CD8-positive, alpha-beta T cell (primary cell): ENCODE measurements at regions of chr4 and their contacts with region 1.

Region 1: GRCh38 chr4:183074296-183074990 is 24.6 kb upstream of the WWC2 start:
- DNase-seq: no peak
- ATAC-seq: no peak
- H3K4me3 ChIP-seq: no peak overlapping the region
- H3K4me3 Mint-ChIP-seq: no peak overlapping the region
- H3K27ac ChIP-seq: no peak overlapping the region
- H3K27ac Mint-ChIP-seq: no peak overlapping the region
- H3K4me1 ChIP-seq: no peaks in the 10 kb centered on the region
- H3K4me1 Mint-ChIP-seq: no peaks in the 10 kb centered on the region
- H3K27me3 ChIP-seq: no peaks in the 10 kb centered on the region
- H3K27me3 Mint-ChIP-seq: peaks cover 7% of the 10 kb centered on the region
- CTCF ChIP-seq: no peak

Region 2: DNA sequence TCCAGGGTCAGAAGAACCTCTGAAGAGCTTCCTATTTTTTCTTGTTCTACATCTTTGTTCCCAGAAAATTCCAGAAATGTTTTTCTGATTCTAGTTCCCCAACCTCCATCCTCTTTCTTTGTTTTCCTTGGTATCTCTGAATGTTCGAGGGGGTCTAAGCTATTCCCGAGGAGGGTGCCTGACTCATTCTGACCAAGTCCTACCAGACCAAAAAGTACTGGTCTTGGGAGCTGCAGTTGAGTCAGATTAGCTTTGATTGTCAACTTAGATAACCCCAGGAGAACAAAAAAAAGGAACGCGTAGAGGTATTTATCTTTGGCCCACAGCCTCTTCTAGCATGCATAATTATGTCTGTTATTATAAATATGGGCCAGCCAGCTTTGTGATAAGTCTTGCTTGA is 843.4 kb before region 1 on chr4:
- CTCF ChIA-PET with region 1: no interaction called
- POLR2A ChIA-PET with region 1: no interaction called
- intact Hi-C with region 1: no loop called
- DNase-seq: no peak
- ATAC-seq: no peak
- H3K4me3 ChIP-seq: no peak overlapping the region
- H3K4me3 Mint-ChIP-seq: no peak overlapping the region
- H3K27ac ChIP-seq: no peak overlapping the region
- H3K27ac Mint-ChIP-seq: no peak overlapping the region
- H3K4me1 ChIP-seq: no peaks in the 10 kb centered on the region
- H3K4me1 Mint-ChIP-seq: no peaks in the 10 kb centered on the region
- H3K27me3 ChIP-seq: no peaks in the 10 kb centered on the region
- H3K27me3 Mint-ChIP-seq: no peaks in the 10 kb centered on the region
- CTCF ChIP-seq: no peak

Region 3: GRCh38 chr4:183098723-183099536 is 24.5 kb after region 1 on chr4 and contains the start of gene WWC2:
- CTCF ChIA-PET with region 1: interaction called, 15 read pairs
- POLR2A ChIA-PET with region 1: no interaction called
- intact Hi-C with region 1: no loop called
- DNase-seq: peak in 8 of 9 experiments; percentile 46 to 78 (median 60)
- ATAC-seq: peak; percentile 78
- H3K4me3 ChIP-seq: peak within 1 kb of the TSS; percentile 62 to 86
- H3K4me3 Mint-ChIP-seq: peak within 1 kb of the TSS; percentile 76
- H3K27ac ChIP-seq: peak within 1 kb of the TSS in 1 of 2 experiments; percentile 22
- H3K27ac Mint-ChIP-seq: no peak within 1 kb of the TSS
- H3K4me1 ChIP-seq: peaks cover 18% of the 10 kb centered on the region
- H3K4me1 Mint-ChIP-seq: peaks cover 10% of the 10 kb centered on the region
- H3K27me3 ChIP-seq: peaks cover 0 to 7% of the 10 kb centered on the region in 2 experiments
- H3K27me3 Mint-ChIP-seq: peaks cover 34% of the 10 kb centered on the region
- CTCF ChIP-seq: no peak
- total RNA-seq, gene WWC2: 0.73 to 1.8 TPM

Region 4: DNA sequence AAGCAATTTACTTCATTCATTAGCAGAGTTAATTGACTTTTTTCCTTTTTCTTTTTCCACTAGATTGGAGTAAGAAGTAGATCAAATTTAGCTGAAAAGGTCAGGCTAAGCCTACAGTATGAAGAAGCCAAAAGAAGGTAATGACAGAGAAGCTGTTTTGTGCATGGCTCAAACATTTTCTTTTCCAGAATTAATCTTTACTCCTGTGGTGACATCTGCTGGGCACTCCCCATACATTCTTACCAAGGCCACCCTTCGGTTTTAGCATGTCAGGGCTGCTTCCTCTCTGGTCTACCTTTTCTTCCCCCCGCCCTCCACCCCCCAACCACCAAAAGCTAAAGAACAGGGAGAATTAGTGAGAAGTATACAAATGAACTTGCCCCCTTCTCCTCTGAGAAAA is 175.4 kb after region 1 on chr4:
- CTCF ChIA-PET with region 1: interaction called, 35 read pairs
- POLR2A ChIA-PET with region 1: no interaction called
- intact Hi-C with region 1: no loop called
- DNase-seq: peak in 2 of 9 experiments; percentile 17 to 32
- ATAC-seq: no peak
- H3K4me3 ChIP-seq: no peak overlapping the region
- H3K4me3 Mint-ChIP-seq: no peak overlapping the region
- H3K27ac ChIP-seq: no peak overlapping the region
- H3K27ac Mint-ChIP-seq: no peak overlapping the region
- H3K4me1 ChIP-seq: no peaks in the 10 kb centered on the region
- H3K4me1 Mint-ChIP-seq: no peaks in the 10 kb centered on the region
- H3K27me3 ChIP-seq: no peaks in the 10 kb centered on the region
- H3K27me3 Mint-ChIP-seq: peaks cover 2% of the 10 kb centered on the region
- CTCF ChIP-seq: no peak

Region 5: GRCh38 chr4:183261953-183262775 is 187.7 kb after region 1 on chr4:
- CTCF ChIA-PET with region 1: interaction called, 35 read pairs
- POLR2A ChIA-PET with region 1: no interaction called
- intact Hi-C with region 1: loop called (anchors 1 kb)
- DNase-seq: peak; percentile 36 to 76 (median 69)
- ATAC-seq: peak; percentile 89
- H3K4me3 ChIP-seq: no peak overlapping the region
- H3K4me3 Mint-ChIP-seq: no peak overlapping the region
- H3K27ac ChIP-seq: no peak overlapping the region
- H3K27ac Mint-ChIP-seq: peak overlapping the region; percentile 7
- H3K4me1 ChIP-seq: peaks cover 4% of the 10 kb centered on the region
- H3K4me1 Mint-ChIP-seq: peaks cover 6% of the 10 kb centered on the region
- H3K27me3 ChIP-seq: no peaks in the 10 kb centered on the region
- H3K27me3 Mint-ChIP-seq: peaks cover 1% of the 10 kb centered on the region
- CTCF ChIP-seq: peak; percentile 73

Region 6: GRCh38 chr4:183407128-183407585 is 332.7 kb after region 1 on chr4:
- CTCF ChIA-PET with region 1: interaction called, 6 read pairs
- POLR2A ChIA-PET with region 1: no interaction called
- intact Hi-C with region 1: loop called in 1 of 2 experiments (anchors 2 kb)
- DNase-seq: peak; percentile 87 to 96 (median 90)
- ATAC-seq: peak; percentile 97
- H3K4me3 ChIP-seq: peak overlapping the region; percentile 54 to 65
- H3K4me3 Mint-ChIP-seq: peak overlapping the region; percentile 85
- H3K27ac ChIP-seq: peak overlapping the region; percentile 52 to 72
- H3K27ac Mint-ChIP-seq: peak overlapping the region; percentile 89
- H3K4me1 ChIP-seq: peaks cover 6% of the 10 kb centered on the region
- H3K4me1 Mint-ChIP-seq: peaks cover 13% of the 10 kb centered on the region
- H3K27me3 ChIP-seq: no peaks in the 10 kb centered on the region
- H3K27me3 Mint-ChIP-seq: no peaks in the 10 kb centered on the region
- CTCF ChIP-seq: peak; percentile 74